ENCODE measurements at regions of chr17 and their contacts with region 1.

Region 1: DNA sequence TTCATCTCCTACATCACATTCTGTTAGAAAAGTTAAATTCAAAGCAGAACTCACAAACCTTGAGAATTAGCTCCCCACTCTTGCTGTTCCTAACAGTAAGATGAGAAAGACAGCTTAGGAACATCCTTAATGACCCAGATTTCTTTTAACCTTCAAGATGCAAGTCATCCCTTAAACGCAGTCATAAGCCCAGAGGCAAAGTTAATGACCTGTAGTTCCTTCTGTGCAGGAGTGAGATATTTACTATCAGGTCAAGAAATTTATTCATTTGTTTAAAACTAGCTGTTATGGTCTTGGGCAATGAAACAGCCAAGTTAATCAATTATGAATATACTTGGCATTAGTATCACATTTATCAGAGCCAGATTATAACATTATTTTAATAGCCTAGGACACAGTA is 37.0 kb downstream of the NXPH3 start:
- DNase-seq: no peak
- ATAC-seq: no peak
- H3K4me3 Mint-ChIP-seq: no peak overlapping the region
- H3K27ac Mint-ChIP-seq: no peak overlapping the region
- H3K4me1 Mint-ChIP-seq: no peaks in the 10 kb centered on the region
- H3K27me3 Mint-ChIP-seq: no peaks in the 10 kb centered on the region

Region 2: GRCh38 chr17:49575579-49576087 is 37.1 kb before region 1 on chr17 and contains the start of gene NXPH3:
- CTCF ChIA-PET with region 1: interaction called, 12 read pairs
- DNase-seq: peak; percentile 75
- ATAC-seq: peak; percentile 94
- H3K4me3 Mint-ChIP-seq: peak within 1 kb of the TSS; percentile 64
- H3K27ac Mint-ChIP-seq: no peak within 1 kb of the TSS
- H3K4me1 Mint-ChIP-seq: peaks cover 22% of the 10 kb centered on the region
- H3K27me3 Mint-ChIP-seq: peaks cover 65% of the 10 kb centered on the region
- total RNA-seq, gene NXPH3: 0.09 TPM in 1 of 2 experiments, not detected in the other

Region 3: DNA sequence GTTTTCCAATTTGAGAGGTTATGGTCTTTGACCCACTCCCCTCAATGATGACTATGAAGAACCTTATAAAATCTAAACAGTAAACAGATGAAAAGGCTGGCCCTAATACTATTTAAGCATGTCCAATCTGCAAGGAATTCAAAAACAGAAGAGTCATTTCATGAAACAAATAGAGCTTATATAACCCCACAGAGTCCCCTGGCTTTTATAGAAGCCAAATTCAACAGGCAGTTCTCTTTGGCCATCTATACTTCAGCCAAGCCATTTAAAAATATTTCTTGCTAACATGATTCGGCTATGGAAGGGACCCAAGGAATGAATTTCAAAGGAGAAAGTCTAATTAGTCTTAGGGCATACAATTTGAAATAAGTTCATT is 21.8 kb after region 1 on chr17:
- CTCF ChIA-PET with region 1: no interaction called
- DNase-seq: no peak
- ATAC-seq: no peak
- H3K4me3 Mint-ChIP-seq: no peak overlapping the region
- H3K27ac Mint-ChIP-seq: no peak overlapping the region
- H3K4me1 Mint-ChIP-seq: peaks cover 8% of the 10 kb centered on the region
- H3K27me3 Mint-ChIP-seq: no peaks in the 10 kb centered on the region

Region 4: DNA sequence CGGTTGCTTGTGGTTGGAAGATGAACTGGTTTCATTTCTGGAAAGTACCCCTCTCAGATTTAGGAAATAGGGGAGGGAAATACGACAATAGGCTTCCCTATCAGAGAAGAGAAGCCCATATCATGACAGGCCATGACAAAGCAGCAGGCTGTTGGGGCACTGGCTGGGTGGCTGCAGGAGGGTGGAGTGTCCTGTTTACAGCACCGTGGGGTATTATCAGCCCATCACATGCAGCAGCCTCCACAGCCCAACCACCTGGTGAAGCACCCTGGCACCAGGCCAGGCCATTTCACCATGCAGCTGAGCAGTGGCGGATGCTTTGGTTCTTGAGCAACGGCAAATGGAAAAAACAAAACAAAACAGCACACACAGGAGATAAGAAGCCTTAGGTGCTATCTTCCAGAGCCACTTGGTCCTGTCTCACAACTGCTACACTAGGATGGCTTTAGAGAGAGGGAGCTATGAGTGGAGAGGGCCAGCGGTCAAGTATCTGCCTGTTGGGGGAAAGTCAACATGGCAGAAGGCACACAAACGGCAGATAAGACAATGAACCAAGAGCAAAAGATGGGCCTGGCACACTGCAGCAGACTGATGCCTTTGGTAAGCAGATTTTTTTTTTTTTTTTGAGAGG is 127.0 kb after region 1 on chr17:
- CTCF ChIA-PET with region 1: no interaction called
- DNase-seq: peak; percentile 95
- ATAC-seq: peak; percentile 93
- H3K4me3 Mint-ChIP-seq: peak overlapping the region; percentile 86
- H3K27ac Mint-ChIP-seq: peak overlapping the region; percentile 100
- H3K4me1 Mint-ChIP-seq: peaks cover 75% of the 10 kb centered on the region
- H3K27me3 Mint-ChIP-seq: no peaks in the 10 kb centered on the region

Measured in activated CD8-positive, alpha-beta memory T cell treated with anti-CD3 and anti-CD28 coated beads, Interleukin-2, amount 10 ng/mL, durations not matched to agents 7 days and 5 days (primary cell).